OCI-LY7 (cell line): ENCODE measurements at regions of chr11 and their contacts with region 1.

Region 1: GRCh38 chr11:16605894-16606783 is 132.3 kb upstream of the C11orf58 start:
- DNase-seq: peak; percentile 63
- H3K4me3 ChIP-seq: no peak overlapping the region
- H3K27ac ChIP-seq: no peak overlapping the region
- H3K4me1 ChIP-seq: no peaks in the 10 kb centered on the region
- CTCF ChIP-seq: peak; percentile 90

Region 2: DNA sequence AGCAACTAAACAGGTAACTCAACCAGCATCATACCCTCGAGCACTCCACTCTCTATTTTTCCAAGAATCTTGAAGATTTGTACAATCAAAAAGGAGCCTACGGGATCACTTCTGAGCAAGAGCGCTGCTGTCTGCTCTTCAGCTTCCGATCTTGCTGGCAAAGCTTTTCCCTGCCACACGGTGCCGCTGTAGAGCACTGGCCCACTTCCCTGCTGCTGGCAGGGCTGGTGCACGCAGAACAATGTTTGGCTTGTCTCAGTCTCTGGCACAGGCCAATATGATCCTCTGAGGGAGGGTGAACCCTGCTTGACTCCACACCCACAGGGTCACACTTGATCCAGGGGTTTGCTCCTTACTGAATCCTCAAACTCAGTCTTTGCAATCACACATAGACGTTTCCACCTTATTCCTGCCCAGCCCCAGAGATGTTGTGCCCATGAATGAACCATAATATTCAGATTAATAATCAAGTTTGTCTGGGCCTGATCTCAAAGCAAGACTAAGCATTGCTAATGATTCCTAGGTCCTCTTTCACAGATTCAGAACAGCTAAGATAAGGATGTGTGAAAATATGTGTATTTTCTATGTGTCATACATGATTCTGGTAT is 786.4 kb before region 1 on chr11:
- CTCF ChIA-PET with region 1: no interaction called
- POLR2A ChIA-PET with region 1: no interaction called
- intact Hi-C with region 1: loop called (anchors 10 kb)
- DNase-seq: peak; percentile 33
- H3K4me3 ChIP-seq: no peak overlapping the region
- H3K27ac ChIP-seq: no peak overlapping the region
- H3K4me1 ChIP-seq: no peaks in the 10 kb centered on the region
- CTCF ChIP-seq: peak; percentile 83

Region 3: GRCh38 chr11:16191212-16191867 is 414.8 kb before region 1 on chr11:
- CTCF ChIA-PET with region 1: no interaction called
- POLR2A ChIA-PET with region 1: no interaction called
- intact Hi-C with region 1: loop called (anchors 5 kb)
- DNase-seq: peak; percentile 60
- H3K4me3 ChIP-seq: peak overlapping the region; percentile 26
- H3K27ac ChIP-seq: peak overlapping the region; percentile 74
- H3K4me1 ChIP-seq: peaks cover 35% of the 10 kb centered on the region
- CTCF ChIP-seq: peak; percentile 65

Region 4: DNA sequence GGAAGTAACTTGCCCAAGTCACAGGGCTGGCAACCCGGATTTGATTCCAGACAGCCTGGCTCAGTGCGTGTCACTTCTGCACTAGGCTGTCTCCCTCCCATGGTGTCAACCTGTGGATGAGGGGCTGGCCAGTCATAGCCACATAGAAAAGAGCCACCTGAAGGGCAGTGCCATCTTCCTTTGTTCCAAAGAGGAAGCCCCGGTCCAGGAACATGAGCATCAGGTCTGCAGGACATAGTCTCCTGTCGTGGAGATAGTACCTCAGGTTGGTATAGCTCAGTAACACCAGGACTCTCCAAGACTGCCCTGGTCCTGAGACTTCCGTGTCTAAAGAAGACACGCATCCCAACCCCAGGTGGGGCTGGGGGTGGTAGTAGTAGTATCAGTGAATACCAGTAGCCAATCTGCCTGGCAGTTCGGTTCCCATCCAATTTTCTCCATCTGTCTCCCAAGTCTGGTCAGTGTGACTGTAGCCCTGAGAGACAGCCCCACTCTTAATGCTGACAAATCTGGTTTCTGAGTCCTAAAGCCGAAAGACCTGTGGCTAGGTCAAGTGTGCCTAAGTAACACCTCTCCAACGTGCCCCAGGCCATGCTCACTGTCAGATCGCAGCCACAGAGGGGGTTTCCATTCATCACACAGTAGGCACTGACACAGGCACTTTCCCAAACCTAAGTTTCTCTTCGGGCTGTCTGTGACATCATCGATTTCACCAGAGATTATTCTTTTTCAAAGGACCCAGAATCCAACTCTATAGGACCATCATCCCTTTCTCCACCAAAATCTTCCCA is 165.4 kb after region 1 on chr11:
- CTCF ChIA-PET with region 1: no interaction called
- POLR2A ChIA-PET with region 1: no interaction called
- intact Hi-C with region 1: no loop called
- DNase-seq: no peak
- H3K4me3 ChIP-seq: no peak overlapping the region
- H3K27ac ChIP-seq: no peak overlapping the region
- H3K4me1 ChIP-seq: no peaks in the 10 kb centered on the region
- CTCF ChIP-seq: no peak

Region 5: GRCh38 chr11:16860617-16861016 is 254.5 kb after region 1 on chr11:
- CTCF ChIA-PET with region 1: no interaction called
- POLR2A ChIA-PET with region 1: no interaction called
- intact Hi-C with region 1: no loop called
- DNase-seq: no peak
- H3K4me3 ChIP-seq: no peak overlapping the region
- H3K27ac ChIP-seq: no peak overlapping the region
- H3K4me1 ChIP-seq: no peaks in the 10 kb centered on the region
- CTCF ChIP-seq: no peak